ENCODE measurements at regions of chr1 and their contacts with region 1.

Region 1: GRCh38 chr1:247331172-247331991 is at the start of gene ZNF496:
- DNase-seq: peak; percentile 74
- ATAC-seq: peak; percentile 83
- H3K4me3 ChIP-seq: peak within 1 kb of the TSS; percentile 86 to 93
- H3K27ac ChIP-seq: peak within 1 kb of the TSS; percentile 94
- H3K4me1 ChIP-seq: peaks cover 15 to 30% of the 10 kb centered on the region in 2 experiments
- H3K27me3 ChIP-seq: no peaks in the 10 kb centered on the region
- CTCF ChIP-seq: no peak
- POLR2A ChIP-seq: no peak
- RAD21 ChIP-seq: no peak
- total RNA-seq, gene ZNF496: 37.4 TPM

Region 2: DNA sequence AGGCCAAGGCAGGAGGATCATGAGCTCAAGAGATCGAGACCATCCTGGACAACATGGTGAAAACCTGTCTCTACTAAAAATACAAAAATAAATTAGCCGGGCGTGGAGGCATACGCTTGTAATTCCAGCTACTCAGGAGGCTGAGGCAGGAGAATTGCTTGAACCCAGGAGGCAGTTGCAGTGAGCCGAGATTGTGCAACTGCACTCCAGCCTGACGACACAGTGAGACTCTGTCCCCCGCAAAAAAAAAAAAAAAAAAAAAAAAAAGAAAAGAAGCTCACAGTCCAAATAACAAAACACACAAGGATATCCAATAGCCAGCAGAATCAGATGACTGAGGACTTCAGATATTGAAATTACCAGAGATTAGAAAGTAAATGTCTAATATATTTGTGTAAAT is 411.5 kb before region 1 on chr1:
- CTCF ChIA-PET with region 1: no interaction called
- POLR2A ChIA-PET with region 1: no interaction called
- RAD21 ChIA-PET with region 1: no interaction called
- intact Hi-C with region 1: loop called (anchors 5 kb)
- DNase-seq: no peak
- ATAC-seq: no peak
- H3K4me3 ChIP-seq: no peak overlapping the region
- H3K27ac ChIP-seq: no peak overlapping the region
- H3K4me1 ChIP-seq: no peaks in the 10 kb centered on the region
- H3K27me3 ChIP-seq: no peaks in the 10 kb centered on the region
- CTCF ChIP-seq: no peak
- POLR2A ChIP-seq: no peak
- RAD21 ChIP-seq: no peak

Region 3: GRCh38 chr1:246931549-246932365 is 399.6 kb before region 1 on chr1 and contains the start of gene AHCTF1:
- CTCF ChIA-PET with region 1: no interaction called
- POLR2A ChIA-PET with region 1: no interaction called
- RAD21 ChIA-PET with region 1: no interaction called
- intact Hi-C with region 1: loop called (anchors 2 kb)
- DNase-seq: peak; percentile 93
- ATAC-seq: peak; percentile 94
- H3K4me3 ChIP-seq: peak within 1 kb of the TSS; percentile 96 to 98
- H3K27ac ChIP-seq: peak within 1 kb of the TSS; percentile 95
- H3K4me1 ChIP-seq: peaks cover 8 to 12% of the 10 kb centered on the region in 2 experiments; a peak in 3 of 4 replicates
- H3K27me3 ChIP-seq: no peaks in the 10 kb centered on the region
- CTCF ChIP-seq: no peak
- POLR2A ChIP-seq: peak; percentile 95
- RAD21 ChIP-seq: no peak
- total RNA-seq, gene AHCTF1: 56.2 TPM

Region 4: DNA sequence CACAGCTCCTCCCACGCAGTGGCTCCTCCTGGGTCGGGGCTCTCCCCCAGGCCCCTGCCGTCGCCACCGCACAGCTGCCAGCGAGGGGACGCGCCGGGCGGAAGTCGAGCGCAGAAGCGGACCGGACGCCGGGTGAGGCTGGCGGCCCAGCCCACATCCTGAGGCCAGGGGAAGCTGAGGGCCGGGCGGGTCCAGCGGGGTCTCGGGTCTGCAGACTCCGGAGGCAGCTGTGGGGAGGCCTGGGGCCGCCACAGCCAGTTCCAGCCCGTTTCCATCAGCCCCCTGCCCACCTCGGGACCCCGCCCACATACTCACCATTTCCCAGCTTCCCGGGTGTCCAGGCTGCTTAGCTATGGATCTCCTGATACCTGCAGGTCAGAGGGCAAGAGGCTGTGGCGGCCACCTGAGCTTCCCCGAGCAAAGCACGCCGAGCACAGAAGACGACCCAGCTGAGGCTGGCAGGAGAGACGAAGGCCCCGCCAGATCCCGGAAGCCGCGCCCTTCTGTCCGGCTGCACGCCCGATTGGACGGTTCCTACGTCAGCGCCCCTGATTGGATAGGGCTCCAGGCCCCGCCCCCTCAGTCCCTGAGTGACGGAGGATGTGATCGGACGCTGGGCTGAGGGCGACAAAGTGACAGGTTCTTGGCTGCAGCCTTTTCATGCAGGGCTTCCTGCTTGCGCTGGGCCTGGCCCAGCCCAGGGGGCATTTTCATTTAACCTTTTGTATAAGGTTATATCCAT is 120.8 kb before region 1 on chr1:
- CTCF ChIA-PET with region 1: no interaction called
- POLR2A ChIA-PET with region 1: no interaction called
- RAD21 ChIA-PET with region 1: no interaction called
- intact Hi-C with region 1: loop called (anchors 5 kb)
- DNase-seq: peak; percentile 91
- ATAC-seq: peak; percentile 99
- H3K4me3 ChIP-seq: peak overlapping the region; percentile 82 to 86
- H3K27ac ChIP-seq: peak overlapping the region; percentile 36; the same call in 1 of the 2 replicates
- H3K4me1 ChIP-seq: peaks cover 6 to 11% of the 10 kb centered on the region in 2 experiments; a peak in 3 of 4 replicates
- H3K27me3 ChIP-seq: no peaks in the 10 kb centered on the region
- CTCF ChIP-seq: no peak
- POLR2A ChIP-seq: peak; percentile 67
- RAD21 ChIP-seq: no peak

Region 5: DNA sequence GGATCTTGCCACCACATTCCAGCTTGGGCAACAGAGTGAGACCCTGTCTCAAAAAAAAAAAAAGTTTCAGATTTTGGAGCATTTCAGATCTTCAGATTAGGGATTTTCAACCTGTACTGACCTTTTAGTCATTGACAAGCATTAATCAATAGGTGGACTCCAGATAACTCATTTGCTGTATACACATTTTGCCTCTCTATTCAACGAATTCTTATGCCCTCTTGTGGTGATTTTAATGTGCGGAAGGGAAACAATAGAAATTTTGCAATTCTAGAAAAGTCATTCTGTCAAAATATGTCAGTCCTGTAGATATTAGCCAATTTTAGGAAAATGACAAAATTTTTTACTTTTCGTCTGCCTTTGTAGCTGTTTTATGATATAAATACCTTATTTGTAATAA is 245.1 kb after region 1 on chr1:
- CTCF ChIA-PET with region 1: no interaction called
- POLR2A ChIA-PET with region 1: no interaction called
- RAD21 ChIA-PET with region 1: no interaction called
- intact Hi-C with region 1: no loop called
- DNase-seq: peak; percentile 4
- ATAC-seq: no peak
- H3K4me3 ChIP-seq: no peak overlapping the region
- H3K27ac ChIP-seq: no peak overlapping the region
- H3K4me1 ChIP-seq: no peaks in the 10 kb centered on the region
- H3K27me3 ChIP-seq: no peaks in the 10 kb centered on the region
- CTCF ChIP-seq: peak; percentile 29 to 49 (median 38); a peak in 4 of 6 replicates
- POLR2A ChIP-seq: no peak
- RAD21 ChIP-seq: peak; percentile 57

Measured in HCT116 (cell line).